GM12878 (cell line): ENCODE measurements at regions of chr14 and their contacts with region 1.

Region 1: DNA sequence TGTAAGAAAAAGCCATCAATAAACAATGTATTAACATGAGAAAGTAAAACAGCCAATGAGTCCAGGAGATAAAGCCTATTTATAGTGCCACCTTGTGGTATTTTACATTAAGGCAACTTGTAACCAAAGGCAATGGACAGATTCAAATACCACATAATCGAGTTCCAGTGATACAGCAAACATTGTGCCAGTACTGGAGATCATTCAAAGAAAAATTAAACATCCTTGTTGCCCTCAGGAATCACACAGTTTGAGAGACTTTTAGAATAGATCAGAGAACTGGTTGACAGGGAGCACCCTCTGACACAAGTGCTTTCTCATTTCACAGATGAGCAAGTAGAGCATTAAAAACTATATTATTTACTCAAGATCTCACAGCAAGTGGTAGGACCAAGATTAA is 98.1 kb downstream of the DDHD1 start:
- DNase-seq: peak; percentile 15
- ATAC-seq: peak; percentile 90
- H3K4me3 ChIP-seq: no peak overlapping the region
- H3K27ac ChIP-seq: no peak overlapping the region
- H3K4me1 ChIP-seq: no peaks in the 10 kb centered on the region
- H3K27me3 ChIP-seq: no peaks in the 10 kb centered on the region
- CTCF ChIP-seq: peak; percentile 53 to 69 (median 67); a peak in 5 of 6 replicates
- EP300 ChIP-seq: no peak
- POLR2A ChIP-seq: no peak
- RAD21 ChIP-seq: peak; percentile 66

Region 2: DNA sequence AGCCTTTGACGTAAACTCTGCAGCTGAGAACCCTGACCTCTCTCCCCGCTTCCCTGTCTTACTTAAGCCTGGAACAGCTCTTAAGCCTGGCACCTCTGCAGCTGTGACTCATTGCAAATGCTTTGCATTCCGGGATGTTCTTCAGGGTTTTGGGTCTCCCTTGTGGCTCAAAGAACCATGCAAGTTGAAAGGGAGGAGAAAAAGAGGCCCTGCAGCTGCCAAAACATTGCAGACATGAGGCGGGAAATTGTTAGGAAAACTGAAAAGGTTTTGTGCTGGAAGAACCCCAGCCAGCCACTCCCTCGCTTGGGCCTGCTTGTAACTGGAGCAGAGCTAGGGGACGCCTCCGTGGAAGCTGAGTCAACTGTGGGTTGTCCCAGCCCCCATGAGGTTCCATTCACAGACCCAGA is 43.9 kb before region 1 on chr14:
- CTCF ChIA-PET with region 1: no interaction called
- POLR2A ChIA-PET with region 1: no interaction called
- RAD21 ChIA-PET with region 1: no interaction called
- SMC1A ChIA-PET with region 1: no interaction called
- in situ Hi-C with region 1: no loop called
- intact Hi-C with region 1: no loop called
- DNase-seq: no peak
- ATAC-seq: no peak
- H3K4me3 ChIP-seq: no peak overlapping the region
- H3K27ac ChIP-seq: no peak overlapping the region
- H3K4me1 ChIP-seq: no peaks in the 10 kb centered on the region
- H3K27me3 ChIP-seq: no peaks in the 10 kb centered on the region; a peak in 1 of 4 replicates
- CTCF ChIP-seq: no peak
- EP300 ChIP-seq: no peak
- POLR2A ChIP-seq: no peak
- RAD21 ChIP-seq: no peak

Region 3: DNA sequence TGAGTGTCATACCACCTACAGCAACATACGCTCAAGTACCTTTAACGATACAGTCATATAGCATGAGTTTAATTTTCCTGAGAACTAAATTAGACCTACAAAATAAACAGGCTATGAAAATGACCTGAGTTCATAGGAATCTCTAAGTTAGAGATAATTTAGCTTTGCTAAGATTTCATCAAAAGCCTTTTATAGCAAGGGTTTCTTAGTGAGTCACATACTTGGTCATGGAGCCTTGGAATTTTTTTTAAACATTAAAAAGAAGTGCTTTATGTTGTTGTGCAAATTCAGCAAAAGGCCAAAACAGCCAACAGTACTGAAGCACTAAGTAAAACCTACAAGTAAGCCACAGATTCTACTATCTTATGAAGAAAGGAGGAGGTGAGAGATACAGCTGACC is 10.5 kb before region 1 on chr14:
- CTCF ChIA-PET with region 1: interaction called, 36 read pairs
- POLR2A ChIA-PET with region 1: no interaction called
- RAD21 ChIA-PET with region 1: no interaction called
- SMC1A ChIA-PET with region 1: interaction called, 4 read pairs
- in situ Hi-C with region 1: no loop called
- intact Hi-C with region 1: no loop called
- DNase-seq: no peak
- ATAC-seq: no peak
- H3K4me3 ChIP-seq: no peak overlapping the region
- H3K27ac ChIP-seq: no peak overlapping the region
- H3K4me1 ChIP-seq: no peaks in the 10 kb centered on the region
- H3K27me3 ChIP-seq: no peaks in the 10 kb centered on the region
- CTCF ChIP-seq: no peak
- EP300 ChIP-seq: no peak
- POLR2A ChIP-seq: no peak
- RAD21 ChIP-seq: no peak

Region 4: GRCh38 chr14:53152890-53153701 is 98.1 kb after region 1 on chr14 and contains the start of gene DDHD1:
- CTCF ChIA-PET with region 1: interaction called, 29 read pairs
- POLR2A ChIA-PET with region 1: no interaction called
- RAD21 ChIA-PET with region 1: interaction called, 6 read pairs
- SMC1A ChIA-PET with region 1: interaction called, 12 read pairs
- in situ Hi-C with region 1: no loop called
- intact Hi-C with region 1: loop called (anchors 5 kb)
- DNase-seq: peak; percentile 51
- ATAC-seq: peak; percentile 81
- H3K4me3 ChIP-seq: peak within 1 kb of the TSS; percentile 94
- H3K27ac ChIP-seq: peak within 1 kb of the TSS; percentile 90
- H3K4me1 ChIP-seq: peaks cover 9% of the 10 kb centered on the region
- H3K27me3 ChIP-seq: no peaks in the 10 kb centered on the region
- CTCF ChIP-seq: no peak
- EP300 ChIP-seq: 0 out of 4 replicates have a peak, but pooled peaks of 1 of the 2 experiments have one; percentile 44
- POLR2A ChIP-seq: peak; percentile 85
- RAD21 ChIP-seq: no peak
- polyA plus RNA-seq, gene DDHD1: 7.7 to 10.0 TPM

Region 5: GRCh38 chr14:53161758-53162435 is 106.9 kb after region 1 on chr14:
- CTCF ChIA-PET with region 1: interaction called, 11 read pairs
- POLR2A ChIA-PET with region 1: no interaction called
- RAD21 ChIA-PET with region 1: no interaction called
- SMC1A ChIA-PET with region 1: interaction called, 4 read pairs
- in situ Hi-C with region 1: no loop called
- intact Hi-C with region 1: no loop called
- DNase-seq: no peak
- ATAC-seq: peak; percentile 57
- H3K4me3 ChIP-seq: no peak overlapping the region
- H3K27ac ChIP-seq: no peak overlapping the region
- H3K4me1 ChIP-seq: peaks cover 5% of the 10 kb centered on the region; the same call in 1 of the 2 replicates
- H3K27me3 ChIP-seq: no peaks in the 10 kb centered on the region
- CTCF ChIP-seq: no peak
- EP300 ChIP-seq: 0 out of 4 replicates have a peak, but pooled peaks of 1 of the 2 experiments have one; percentile 27
- POLR2A ChIP-seq: no peak
- RAD21 ChIP-seq: no peak

Region 6: DNA sequence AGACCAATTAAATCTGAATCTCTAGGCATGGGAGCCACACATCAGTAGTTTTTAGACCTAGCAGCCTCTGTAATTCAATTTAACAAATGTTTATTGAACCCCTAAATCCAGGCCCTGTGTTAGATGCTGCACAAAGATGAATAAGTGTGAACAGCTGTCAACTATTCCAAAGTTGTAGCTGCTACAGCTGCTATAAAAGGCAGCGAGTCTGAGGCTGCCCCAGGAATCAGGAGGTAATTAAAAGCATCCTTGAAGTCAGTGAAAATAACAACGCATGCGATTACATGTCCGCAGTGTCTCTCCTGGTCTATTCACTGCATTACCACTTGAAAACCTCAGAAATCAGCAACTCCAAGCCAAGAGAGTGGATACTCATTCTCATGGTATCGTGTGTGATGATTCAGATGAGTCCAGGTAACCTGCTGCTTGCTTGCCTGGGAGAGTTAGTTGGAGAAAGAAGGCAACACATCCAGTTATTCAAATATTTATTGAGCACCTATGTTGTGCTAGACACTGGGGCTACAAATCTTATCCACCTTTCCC is 133.0 kb after region 1 on chr14:
- CTCF ChIA-PET with region 1: no interaction called
- POLR2A ChIA-PET with region 1: no interaction called
- RAD21 ChIA-PET with region 1: no interaction called
- SMC1A ChIA-PET with region 1: no interaction called
- in situ Hi-C with region 1: no loop called
- intact Hi-C with region 1: no loop called
- DNase-seq: no peak
- ATAC-seq: no peak
- H3K4me3 ChIP-seq: no peak overlapping the region
- H3K27ac ChIP-seq: no peak overlapping the region
- H3K4me1 ChIP-seq: no peaks in the 10 kb centered on the region
- H3K27me3 ChIP-seq: no peaks in the 10 kb centered on the region
- CTCF ChIP-seq: no peak
- EP300 ChIP-seq: no peak
- POLR2A ChIP-seq: no peak
- RAD21 ChIP-seq: no peak

Region 7: GRCh38 chr14:53306267-53306721 is 251.3 kb after region 1 on chr14:
- CTCF ChIA-PET with region 1: interaction called, 23 read pairs
- POLR2A ChIA-PET with region 1: no interaction called
- RAD21 ChIA-PET with region 1: no interaction called
- SMC1A ChIA-PET with region 1: interaction called, 3 read pairs
- in situ Hi-C with region 1: no loop called
- intact Hi-C with region 1: loop called (anchors 2 kb)
- DNase-seq: no peak
- ATAC-seq: peak; percentile 77
- H3K4me3 ChIP-seq: peak overlapping the region; percentile 74; the same call in 1 of the 2 replicates
- H3K27ac ChIP-seq: no peak overlapping the region
- H3K4me1 ChIP-seq: peaks cover 6% of the 10 kb centered on the region
- H3K27me3 ChIP-seq: no peaks in the 10 kb centered on the region
- CTCF ChIP-seq: peak; percentile 67 to 80 (median 69); a peak in 5 of 6 replicates
- EP300 ChIP-seq: no peak
- POLR2A ChIP-seq: no peak
- RAD21 ChIP-seq: peak; percentile 93